ENCODE measurements at regions of chr15 and their contacts with region 1.

Region 1: GRCh38 chr15:76190834-76191538 is 120.3 kb downstream of the ETFA start:
- DNase-seq: peak; percentile 38
- H3K4me3 ChIP-seq: no peak overlapping the region; the same call in 1 of the 2 replicates
- H3K27ac ChIP-seq: no peak overlapping the region
- H3K27me3 ChIP-seq: peaks cover 8% of the 10 kb centered on the region
- CTCF ChIP-seq: peak; percentile 91

Region 2: DNA sequence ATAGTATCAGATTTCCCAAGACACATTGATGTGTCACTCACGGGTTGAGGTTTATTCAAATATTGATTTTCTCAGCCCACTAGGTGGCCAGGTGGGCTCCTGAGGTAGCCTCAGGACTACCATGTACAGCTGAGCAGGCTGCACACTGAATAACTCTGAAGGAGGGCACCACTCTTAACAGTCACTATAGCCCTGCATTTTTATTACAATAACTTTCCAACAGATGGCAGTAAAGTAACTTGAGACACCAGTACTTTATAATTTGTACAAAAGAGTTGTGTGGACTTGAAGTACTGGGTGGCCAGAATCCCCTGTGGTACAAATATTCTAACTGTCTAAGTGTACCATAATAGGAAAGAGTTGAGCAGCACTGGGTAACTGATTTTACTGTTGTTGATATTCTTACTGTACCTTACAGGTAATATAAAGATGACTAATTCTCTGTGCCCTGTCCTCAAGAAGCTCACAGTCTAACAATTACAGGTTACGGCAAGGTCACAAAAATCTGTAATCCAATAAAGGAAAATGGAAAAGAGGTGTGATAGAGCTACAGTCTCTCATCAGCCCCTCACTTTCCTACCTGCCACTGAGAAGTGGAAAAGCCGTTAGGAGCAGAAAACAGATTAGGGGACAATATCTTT is 44.3 kb after region 1 on chr15:
- CTCF ChIA-PET with region 1: interaction called, 15 read pairs
- POLR2A ChIA-PET with region 1: no interaction called
- DNase-seq: peak; percentile 16
- H3K4me3 ChIP-seq: no peak overlapping the region
- H3K27ac ChIP-seq: no peak overlapping the region
- H3K27me3 ChIP-seq: no peaks in the 10 kb centered on the region
- CTCF ChIP-seq: peak; percentile 49

Region 3: DNA sequence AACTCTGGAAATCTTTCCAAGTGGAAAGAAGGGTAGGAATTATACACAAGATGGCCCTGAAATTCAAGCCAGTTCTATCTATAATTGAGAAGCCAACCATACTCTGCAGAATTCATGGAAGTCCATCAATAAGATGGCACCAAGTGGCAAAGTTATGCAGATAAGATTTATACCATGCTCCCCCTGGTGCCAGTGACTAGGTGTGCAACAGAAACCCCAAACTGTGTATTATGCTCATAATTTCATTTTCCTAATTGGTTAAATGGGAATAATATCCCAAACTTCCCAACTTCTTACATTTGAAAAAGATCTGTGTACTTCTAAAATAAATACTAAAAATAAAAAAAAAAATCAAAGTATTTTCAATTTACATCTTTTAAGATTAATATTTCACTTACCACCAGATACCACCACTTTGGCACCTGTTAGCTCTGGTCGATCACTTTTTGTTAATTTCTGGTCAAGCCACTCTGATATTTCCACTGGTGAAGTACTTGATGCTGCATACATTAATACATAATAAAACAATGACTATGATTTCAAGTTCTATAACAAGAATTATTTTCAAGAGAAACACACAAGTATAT is 94.3 kb after region 1 on chr15:
- CTCF ChIA-PET with region 1: interaction called, 10 read pairs
- POLR2A ChIA-PET with region 1: no interaction called
- DNase-seq: no peak
- H3K4me3 ChIP-seq: no peak overlapping the region
- H3K27ac ChIP-seq: no peak overlapping the region
- H3K27me3 ChIP-seq: no peaks in the 10 kb centered on the region
- CTCF ChIP-seq: peak; percentile 63

Region 4: DNA sequence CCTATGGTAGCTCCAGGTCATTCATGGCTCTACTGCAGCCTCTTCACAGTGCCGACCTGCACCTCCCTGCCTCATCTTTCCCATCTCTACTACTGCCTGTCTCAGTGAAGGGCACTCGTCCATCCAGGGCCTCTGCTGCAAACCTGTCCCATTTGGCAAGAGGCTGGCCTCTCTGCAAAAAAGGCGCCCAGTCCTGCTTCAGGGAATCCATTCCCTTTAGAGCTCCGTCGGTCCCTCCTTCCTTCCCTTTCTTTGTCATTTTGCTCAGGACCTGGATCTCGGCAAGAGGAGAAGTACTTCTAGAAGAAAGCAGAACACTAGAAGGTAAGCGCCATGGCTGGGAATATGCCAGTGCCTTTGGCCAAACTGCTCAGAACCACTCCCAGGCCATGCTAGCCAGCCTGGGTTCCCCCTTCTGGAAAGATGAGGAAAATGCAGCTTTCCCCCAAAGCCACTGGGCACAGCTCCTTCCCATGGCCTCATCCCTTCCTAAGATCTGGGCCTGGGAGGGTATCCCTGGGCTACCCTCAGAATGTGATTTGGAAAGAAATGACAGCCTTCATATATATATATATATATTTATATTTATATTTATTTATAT is 139.2 kb after region 1 on chr15:
- CTCF ChIA-PET with region 1: interaction called, 15 read pairs
- POLR2A ChIA-PET with region 1: no interaction called
- DNase-seq: no peak
- H3K4me3 ChIP-seq: no peak overlapping the region
- H3K27ac ChIP-seq: no peak overlapping the region
- H3K27me3 ChIP-seq: peaks cover 7% of the 10 kb centered on the region
- CTCF ChIP-seq: peak; percentile 71

Region 5: GRCh38 chr15:76866716-76867321 is 675.8 kb after region 1 on chr15:
- CTCF ChIA-PET with region 1: interaction called, 20 read pairs
- POLR2A ChIA-PET with region 1: no interaction called
- DNase-seq: peak; percentile 21
- H3K4me3 ChIP-seq: no peak overlapping the region
- H3K27ac ChIP-seq: no peak overlapping the region
- H3K27me3 ChIP-seq: no peaks in the 10 kb centered on the region
- CTCF ChIP-seq: peak; percentile 65